Heart right ventricle (tissue), 16 donors: ENCODE measurements at regions of chr11 and their contacts with region 1.

Region 1: GRCh38 chr11:9144830-9145229 is 53.4 kb upstream of the SCUBE2 start:
- DNase-seq: no peak
- ATAC-seq: no peak
- H3K4me3 ChIP-seq: no peak overlapping the region
- H3K27ac ChIP-seq: no peak overlapping the region
- H3K4me1 ChIP-seq: peaks cover 0 to 11% (median 0%) of the 10 kb centered on the region in 9 donors
- H3K27me3 ChIP-seq: no peaks in the 10 kb centered on the region
- CTCF ChIP-seq: no peak

Region 2: GRCh38 chr11:8503910-8504364 is 640.9 kb before region 1 on chr11:
- intact Hi-C with region 1: no loop called
- DNase-seq: no peak
- ATAC-seq: peak in 2 of 8 donors; percentile 31 to 56
- H3K4me3 ChIP-seq: no peak overlapping the region
- H3K27ac ChIP-seq: peak overlapping the region in 3 of 10 donors; percentile 5 to 59 (median 17)
- H3K4me1 ChIP-seq: peaks cover 0 to 14% (median 6%) of the 10 kb centered on the region in 9 donors
- H3K27me3 ChIP-seq: no peaks in the 10 kb centered on the region
- CTCF ChIP-seq: no peak

Region 3: GRCh38 chr11:8739309-8739793 is 405.5 kb before region 1 on chr11:
- intact Hi-C with region 1: loop called in 1 of 10 experiments (anchors 5 kb)
- DNase-seq: no peak
- ATAC-seq: peak in 2 of 8 donors; percentile 32 to 49
- H3K4me3 ChIP-seq: no peak overlapping the region
- H3K27ac ChIP-seq: no peak overlapping the region
- H3K4me1 ChIP-seq: peaks cover 0 to 48% (median 18%) of the 10 kb centered on the region in 9 donors
- H3K27me3 ChIP-seq: no peaks in the 10 kb centered on the region
- CTCF ChIP-seq: no peak

Region 4: GRCh38 chr11:9247863-9248262 is 103.0 kb after region 1 on chr11:
- intact Hi-C with region 1: no loop called
- DNase-seq: no peak
- ATAC-seq: no peak
- H3K4me3 ChIP-seq: no peak overlapping the region
- H3K27ac ChIP-seq: no peak overlapping the region
- H3K4me1 ChIP-seq: peaks cover 0 to 82% (median 36%) of the 10 kb centered on the region in 9 donors
- H3K27me3 ChIP-seq: no peaks in the 10 kb centered on the region
- CTCF ChIP-seq: no peak